AG04449 (cell line): ENCODE measurements at regions of chr1 and their contacts with region 1.

Region 1: GRCh38 chr1:211133836-211134669 is at the start of gene KCNH1:
- DNase-seq: no peak
- H3K4me3 ChIP-seq: peak within 1 kb of the TSS; percentile 66
- CTCF ChIP-seq: peak; percentile 83

Region 2: GRCh38 chr1:210400043-210400840 is 733.8 kb before region 1 on chr1:
- CTCF ChIA-PET with region 1: interaction called, 328 read pairs
- POLR2A ChIA-PET with region 1: no interaction called
- DNase-seq: peak; percentile 38
- H3K4me3 ChIP-seq: no peak overlapping the region
- CTCF ChIP-seq: peak; percentile 86

Region 3: GRCh38 chr1:210448297-210448892 is 685.7 kb before region 1 on chr1:
- CTCF ChIA-PET with region 1: interaction called, 403 read pairs
- POLR2A ChIA-PET with region 1: interaction called, 11 read pairs
- DNase-seq: peak; percentile 33
- H3K4me3 ChIP-seq: no peak overlapping the region
- CTCF ChIP-seq: peak; percentile 54

Region 4: GRCh38 chr1:210568631-210569030 is 565.4 kb before region 1 on chr1:
- CTCF ChIA-PET with region 1: interaction called, 24 read pairs
- POLR2A ChIA-PET with region 1: no interaction called
- DNase-seq: no peak
- H3K4me3 ChIP-seq: no peak overlapping the region
- CTCF ChIP-seq: no peak

Region 5: GRCh38 chr1:211118407-211119102 is 15.5 kb before region 1 on chr1:
- CTCF ChIA-PET with region 1: interaction called, 17 read pairs
- POLR2A ChIA-PET with region 1: no interaction called
- DNase-seq: no peak
- H3K4me3 ChIP-seq: no peak overlapping the region
- CTCF ChIP-seq: no peak